Right lobe of liver (tissue), 6 donors: ENCODE measurements at regions of chr10 and their contacts with region 1.

Region 1: GRCh38 chr10:87646939-87647338 is 12.7 kb upstream of the PAPSS2 start:
- DNase-seq: no peak
- ATAC-seq: peak in 1 of 4 donors; percentile 18
- H3K4me3 ChIP-seq: no peak overlapping the region
- H3K27ac ChIP-seq: no peak overlapping the region
- H3K4me1 ChIP-seq: no peaks in the 10 kb centered on the region
- H3K27me3 ChIP-seq: no peaks in the 10 kb centered on the region
- CTCF ChIP-seq: no peak
- POLR2A ChIP-seq: no peak

Region 2: DNA sequence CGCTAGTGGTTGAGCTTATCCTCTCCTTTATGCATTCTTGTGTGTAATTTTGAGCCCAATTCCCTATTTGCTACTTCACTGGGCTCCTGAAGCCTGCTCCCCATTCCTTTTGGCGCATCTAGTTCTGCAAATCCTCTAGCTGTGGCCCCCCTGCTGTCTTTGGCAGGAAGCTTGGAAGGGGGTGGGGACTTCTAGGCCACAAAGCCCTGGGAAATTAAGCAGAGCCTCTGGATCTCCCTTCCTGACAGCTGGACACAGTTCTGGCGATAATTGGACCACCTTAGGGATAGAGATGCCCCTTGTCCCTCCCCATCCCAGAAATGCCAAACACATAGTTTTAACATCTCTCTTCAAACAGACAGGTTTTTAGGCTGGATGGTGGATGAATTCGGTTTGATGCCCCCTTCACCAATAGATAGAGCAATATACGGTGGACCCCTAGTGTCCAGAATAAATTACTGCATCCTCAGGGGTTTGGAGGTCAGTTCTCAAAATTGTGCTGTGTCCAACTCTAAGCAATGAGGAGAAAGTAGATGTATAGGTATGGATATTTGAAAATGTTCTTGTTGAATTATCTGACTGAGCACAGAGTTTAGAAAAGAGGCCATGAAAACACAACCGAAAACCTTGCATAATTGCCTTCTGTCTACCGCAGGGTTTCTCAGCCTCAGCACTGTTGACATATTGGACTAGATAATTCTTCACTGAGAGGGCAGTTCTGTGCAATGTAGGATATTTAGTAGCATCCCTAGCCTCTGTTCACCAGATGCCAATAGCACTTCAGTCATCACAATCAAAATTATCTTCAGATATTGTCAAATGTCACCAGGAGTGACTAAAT is 88.3 kb after region 1 on chr10:
- intact Hi-C with region 1: loop called in 1 of 2 experiments (anchors 10 kb)
- DNase-seq: no peak
- ATAC-seq: peak; percentile 73 to 88 (median 78)
- H3K4me3 ChIP-seq: no peak overlapping the region
- H3K27ac ChIP-seq: peak overlapping the region in 1 of 3 donors; percentile 7
- H3K4me1 ChIP-seq: peaks cover 0 to under 1% (median 0%) of the 10 kb centered on the region in 4 donors
- H3K27me3 ChIP-seq: no peaks in the 10 kb centered on the region
- CTCF ChIP-seq: peak; percentile 68 to 80 (median 71)
- POLR2A ChIP-seq: no peak